Heart left ventricle (tissue), 16 donors: ENCODE measurements at regions of chr16 and their contacts with region 1.

Region 1: GRCh38 chr16:67935402-67936123 is 1.1 kb downstream of the PSMB10 start:
- DNase-seq: peak; percentile 95 to 96 (median 95)
- ATAC-seq: peak; percentile 89 to 93 (median 92)
- H3K4me3 ChIP-seq: peak overlapping the region; percentile 57 to 98 (median 77)
- H3K27ac ChIP-seq: peak overlapping the region; percentile 82 to 99 (median 92)
- H3K4me1 ChIP-seq: peaks cover 0 to 42% (median 23%) of the 10 kb centered on the region in 12 donors
- H3K27me3 ChIP-seq: no peaks in the 10 kb centered on the region
- CTCF ChIP-seq: no peak
- POLR2A ChIP-seq: peak; percentile 13 to 68

Region 2: DNA sequence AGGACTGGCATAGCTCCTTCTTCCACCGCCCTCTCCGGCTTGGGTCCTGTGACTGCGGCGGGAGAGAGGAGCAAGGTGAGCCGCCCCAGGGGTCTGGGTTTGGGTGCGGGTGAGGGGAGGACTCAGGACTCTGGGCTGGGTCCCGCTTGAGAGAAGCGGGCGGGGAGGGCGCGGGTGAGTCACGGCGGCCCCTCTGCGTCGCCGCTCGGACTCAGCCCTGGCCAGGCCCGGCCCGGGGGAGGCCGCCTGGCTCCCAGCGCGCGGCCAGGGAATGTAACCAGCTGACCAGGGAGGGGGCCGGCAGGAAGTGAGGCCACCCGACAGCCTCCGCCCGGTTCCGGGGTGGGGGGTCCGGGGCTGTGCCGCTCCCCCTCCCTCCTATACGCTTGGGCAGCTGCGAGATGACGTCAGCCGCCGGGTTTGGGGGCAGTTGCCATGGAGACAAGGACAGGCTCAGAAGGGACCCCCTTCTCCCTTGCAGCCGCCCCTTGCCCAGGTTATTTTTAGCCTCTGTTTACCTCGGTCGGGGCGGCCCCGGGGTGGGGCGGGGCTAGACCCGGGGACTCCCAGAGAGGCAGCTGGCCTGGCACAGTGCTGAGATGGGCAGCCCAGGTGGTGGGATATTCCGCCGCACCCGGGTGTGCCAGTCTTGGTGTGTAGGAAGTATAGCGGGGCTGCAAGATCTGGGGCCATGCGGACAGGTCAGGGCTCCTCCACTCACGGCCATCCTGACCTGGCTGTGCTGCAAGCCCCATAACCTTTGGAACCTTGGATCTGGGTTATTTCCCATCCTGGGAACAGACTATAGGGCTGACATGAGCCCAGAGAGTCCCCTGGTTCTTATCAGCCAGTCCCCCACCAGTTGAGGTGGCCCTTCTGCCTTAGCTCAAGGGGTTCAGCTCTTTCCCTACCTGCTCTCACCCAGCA is 405.3 kb before region 1 on chr16:
- intact Hi-C with region 1: loop called in 3 of 10 experiments (anchors 5 to 10 kb)
- DNase-seq: peak; percentile 88 to 91 (median 90)
- ATAC-seq: peak; percentile 63 to 89 (median 80)
- H3K4me3 ChIP-seq: peak overlapping the region; percentile 66 to 97 (median 82)
- H3K27ac ChIP-seq: peak overlapping the region; percentile 80 to 99 (median 96)
- H3K4me1 ChIP-seq: peaks cover 0 to 70% (median 49%) of the 10 kb centered on the region in 12 donors
- H3K27me3 ChIP-seq: no peaks in the 10 kb centered on the region
- CTCF ChIP-seq: no peak
- POLR2A ChIP-seq: peak; percentile 21 to 88

Region 3: GRCh38 chr16:67968400-67969253 is 33.1 kb after region 1 on chr16 and contains the start of gene SLC12A4:
- intact Hi-C with region 1: loop called in 1 of 10 experiments (anchors 1 kb)
- DNase-seq: peak; percentile 93 to 95 (median 94)
- ATAC-seq: peak; percentile 84 to 91 (median 90)
- H3K4me3 ChIP-seq: peak within 1 kb of the TSS; percentile 67 to 100 (median 91)
- H3K27ac ChIP-seq: peak within 1 kb of the TSS; percentile 95 to 100 (median 99)
- H3K4me1 ChIP-seq: peaks cover 21 to 49% (median 41%) of the 10 kb centered on the region in 12 donors
- H3K27me3 ChIP-seq: no peaks in the 10 kb centered on the region
- CTCF ChIP-seq: peak in 4 of 12 donors; percentile 14 to 28 (median 23)
- POLR2A ChIP-seq: peak; percentile 94 to 98
- total RNA-seq, gene SLC12A4: 64.6 to 92.2 (median 86.8) TPM

Region 4: DNA sequence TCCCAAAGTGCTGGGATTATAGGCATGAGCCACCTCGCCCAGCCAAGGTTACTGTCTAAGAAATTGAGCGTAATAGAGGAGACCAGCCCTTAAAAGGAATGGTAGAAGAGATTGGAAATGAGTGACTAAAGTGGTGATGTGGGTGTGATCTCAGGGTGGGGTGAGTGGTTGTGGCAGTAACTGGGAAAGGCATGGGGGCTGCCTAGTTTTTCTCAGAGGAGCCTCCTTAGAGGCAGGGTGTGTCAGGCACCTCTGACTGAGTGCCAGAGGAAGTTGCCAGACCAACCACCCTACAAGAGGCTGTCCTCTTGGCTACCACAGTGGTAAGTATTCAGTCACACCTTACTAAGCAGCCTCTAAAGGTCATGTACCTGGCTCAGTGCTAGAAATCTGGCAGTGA is 96.4 kb after region 1 on chr16:
- intact Hi-C with region 1: loop called in 1 of 10 experiments (anchors 10 kb)
- DNase-seq: no peak
- ATAC-seq: no peak
- H3K4me3 ChIP-seq: no peak overlapping the region
- H3K27ac ChIP-seq: no peak overlapping the region
- H3K4me1 ChIP-seq: no peaks in the 10 kb centered on the region
- H3K27me3 ChIP-seq: no peaks in the 10 kb centered on the region
- CTCF ChIP-seq: no peak
- POLR2A ChIP-seq: no peak

Region 5: GRCh38 chr16:68244903-68245853 is 309.6 kb after region 1 on chr16 and contains the start of gene PLA2G15:
- intact Hi-C with region 1: no loop called
- DNase-seq: peak; percentile 98 to 99 (median 98)
- ATAC-seq: peak; percentile 91 to 97 (median 96)
- H3K4me3 ChIP-seq: peak within 1 kb of the TSS; percentile 65 to 98 (median 86)
- H3K27ac ChIP-seq: peak within 1 kb of the TSS in 11 of 12 donors; percentile 75 to 97 (median 87)
- H3K4me1 ChIP-seq: peaks cover 4 to 55% (median 47%) of the 10 kb centered on the region in 12 donors
- H3K27me3 ChIP-seq: no peaks in the 10 kb centered on the region
- CTCF ChIP-seq: peak in 1 of 12 donors; percentile 17
- POLR2A ChIP-seq: peak; percentile 78 to 94
- total RNA-seq, gene PLA2G15: 27.3 to 68.0 (median 45.4) TPM